ENCODE measurements at regions of chr3 and their contacts with region 1.

Region 1: DNA sequence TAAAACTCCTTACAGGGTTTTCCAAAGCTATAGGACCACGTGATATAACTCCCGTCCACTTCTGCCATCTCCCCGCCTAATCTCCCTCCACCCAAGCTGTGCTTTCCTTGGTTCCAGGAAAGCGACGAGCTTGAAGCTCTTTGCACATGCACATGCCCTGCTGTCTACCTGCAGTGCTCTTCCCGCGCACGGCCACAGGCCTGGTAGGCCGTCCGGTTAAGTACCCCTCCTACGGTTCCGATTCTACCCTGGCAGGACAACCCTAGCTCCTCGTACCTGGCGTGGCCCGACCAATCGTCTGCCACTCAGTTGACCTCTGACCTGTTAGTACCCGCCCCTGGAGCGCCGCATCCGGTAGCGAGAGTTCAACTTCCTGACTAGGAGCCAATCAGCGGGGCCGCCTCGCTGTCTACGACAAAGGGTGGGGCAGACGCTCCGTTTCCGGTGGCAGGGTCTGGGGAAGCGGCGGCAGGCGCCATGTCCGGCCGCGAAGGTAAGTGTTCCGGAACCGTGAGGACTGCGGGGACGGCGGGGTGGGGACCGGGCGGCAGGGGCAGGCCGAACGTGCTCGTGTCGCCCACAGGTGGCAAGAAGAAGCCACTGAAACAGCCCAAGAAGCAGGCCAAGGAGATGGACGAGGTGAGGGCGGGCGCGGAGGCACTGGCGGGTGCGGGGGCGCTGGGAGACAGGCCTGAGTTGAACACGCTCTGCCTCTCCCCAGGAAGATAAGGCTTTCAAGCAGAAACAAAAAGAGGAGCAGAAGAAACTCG is at the starts of genes CCDC51 and TMA7:
- DNase-seq: peak; percentile 97 to 98 (median 97)
- H3K4me3 ChIP-seq: peak within 1 kb of the TSS; percentile 71 to 99 (median 87)
- H3K27ac ChIP-seq: peak within 1 kb of the TSS; percentile 74 to 88
- H3K4me1 ChIP-seq: peaks cover 8 to 37% (median 22%) of the 10 kb centered on the region in 4 experiments
- H3K27me3 ChIP-seq: no peaks in the 10 kb centered on the region

Region 2: GRCh38 chr3:48215466-48215865 is 224.5 kb before region 1 on chr3:
- CTCF ChIA-PET with region 1: no interaction called
- POLR2A ChIA-PET with region 1: no interaction called
- DNase-seq: no peak
- H3K4me3 ChIP-seq: no peak overlapping the region
- H3K27ac ChIP-seq: no peak overlapping the region
- H3K4me1 ChIP-seq: no peaks in the 10 kb centered on the region
- H3K27me3 ChIP-seq: no peaks in the 10 kb centered on the region

Region 3: DNA sequence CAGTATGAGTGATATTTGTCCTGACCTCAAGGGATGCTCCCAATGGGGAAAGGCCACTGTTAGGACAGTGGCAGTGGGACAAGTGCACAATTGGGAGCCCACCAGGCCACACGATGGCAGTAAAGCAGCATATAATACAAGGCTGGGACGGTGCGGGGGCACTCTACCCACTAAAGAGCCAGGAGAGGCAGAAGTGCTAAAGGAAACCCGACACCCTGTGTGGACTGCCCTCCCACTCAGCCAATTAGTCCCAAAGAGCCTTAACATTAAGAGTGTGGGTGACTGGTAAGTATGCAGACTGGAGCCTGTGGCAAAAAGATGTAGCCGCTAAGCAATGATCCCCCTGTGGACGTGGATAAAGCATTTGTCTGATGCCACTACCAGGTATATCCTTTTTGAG is 207.3 kb before region 1 on chr3:
- CTCF ChIA-PET with region 1: interaction called, 52 read pairs
- POLR2A ChIA-PET with region 1: no interaction called
- DNase-seq: peak; percentile 64 to 77 (median 75)
- H3K4me3 ChIP-seq: peak overlapping the region in 3 of 7 experiments; percentile 5 to 51 (median 39)
- H3K27ac ChIP-seq: no peak overlapping the region
- H3K4me1 ChIP-seq: peaks cover 2 to 19% (median 7%) of the 10 kb centered on the region in 4 experiments
- H3K27me3 ChIP-seq: no peaks in the 10 kb centered on the region

Region 4: DNA sequence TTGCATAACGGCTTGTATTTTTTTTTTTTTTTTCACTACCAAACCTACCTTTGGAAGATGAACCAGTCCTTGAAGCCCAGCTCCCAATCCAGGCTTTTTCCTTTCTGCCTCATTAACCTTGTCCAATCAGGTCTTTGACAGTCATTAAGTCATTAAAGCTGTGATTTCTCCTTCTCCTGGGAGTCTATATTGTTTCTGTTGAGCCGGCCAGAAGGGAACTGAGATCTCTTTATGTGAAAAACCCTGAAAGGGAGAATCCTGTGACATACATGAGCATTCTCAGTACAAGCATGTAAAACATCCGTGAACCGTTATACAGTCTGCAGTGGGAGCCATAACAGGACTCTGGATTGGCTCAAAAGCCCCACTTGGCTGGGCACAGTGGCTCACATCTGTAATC is 159.1 kb before region 1 on chr3:
- CTCF ChIA-PET with region 1: interaction called, 164 read pairs
- POLR2A ChIA-PET with region 1: interaction called, 3 read pairs
- DNase-seq: no peak
- H3K4me3 ChIP-seq: no peak overlapping the region
- H3K27ac ChIP-seq: no peak overlapping the region
- H3K4me1 ChIP-seq: no peaks in the 10 kb centered on the region
- H3K27me3 ChIP-seq: no peaks in the 10 kb centered on the region

Region 5: GRCh38 chr3:48408823-48409281 is 31.2 kb before region 1 on chr3:
- CTCF ChIA-PET with region 1: interaction called, 137 read pairs
- POLR2A ChIA-PET with region 1: no interaction called
- DNase-seq: no peak
- H3K4me3 ChIP-seq: no peak overlapping the region
- H3K27ac ChIP-seq: no peak overlapping the region
- H3K4me1 ChIP-seq: no peaks in the 10 kb centered on the region
- H3K27me3 ChIP-seq: no peaks in the 10 kb centered on the region

Region 6: DNA sequence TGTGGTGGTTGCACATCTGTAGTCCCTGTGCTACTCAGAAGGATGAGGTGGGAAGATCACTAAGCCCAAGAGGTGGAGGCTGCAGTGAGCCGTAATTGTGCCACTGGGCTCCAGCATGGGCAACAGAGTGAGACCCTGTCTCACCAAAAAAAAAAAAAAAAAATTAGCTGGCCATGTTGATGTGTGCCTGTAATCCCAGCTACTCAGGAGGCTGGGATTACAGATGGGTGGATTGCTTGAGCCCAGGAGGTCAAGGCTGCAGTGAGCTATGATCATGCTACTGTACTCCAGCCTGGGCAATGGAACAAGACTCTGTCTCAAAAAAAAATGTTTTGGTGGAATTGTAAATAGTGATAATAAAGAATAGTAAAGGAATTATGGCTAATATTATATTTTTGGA is 16.5 kb after region 1 on chr3:
- CTCF ChIA-PET with region 1: interaction called, 12 read pairs
- POLR2A ChIA-PET with region 1: interaction called, 3 read pairs
- DNase-seq: no peak
- H3K4me3 ChIP-seq: no peak overlapping the region
- H3K27ac ChIP-seq: no peak overlapping the region
- H3K4me1 ChIP-seq: no peaks in the 10 kb centered on the region
- H3K27me3 ChIP-seq: no peaks in the 10 kb centered on the region